Naive thymus-derived CD4-positive, alpha-beta T cell (primary cell): ENCODE measurements at regions of chr1 and their contacts with region 1.

Region 1: GRCh38 chr1:181397845-181398244 is 85.5 kb upstream of the CACNA1E start:
- DNase-seq: peak in 7 of 9 donors; percentile 24 to 57 (median 45)
- ATAC-seq: peak; percentile 47
- H3K4me3 ChIP-seq: peak overlapping the region; percentile 22
- H3K4me3 Mint-ChIP-seq: peak overlapping the region in 8 of 10 donors; percentile 57 to 82 (median 74)
- H3K27ac ChIP-seq: peak overlapping the region; percentile 62
- H3K27ac Mint-ChIP-seq: peak overlapping the region in 2 of 9 donors; percentile 83 to 94
- H3K4me1 ChIP-seq: peaks cover 41 to 77% of the 10 kb centered on the region in 2 donors
- H3K4me1 Mint-ChIP-seq: peaks cover 26 to 45% (median 41%) of the 10 kb centered on the region in 7 donors
- H3K27me3 ChIP-seq: no peaks in the 10 kb centered on the region
- H3K27me3 Mint-ChIP-seq: no peaks in the 10 kb centered on the region

Region 2: GRCh38 chr1:181033799-181034451 is 363.9 kb before region 1 on chr1 and contains the start of gene MR1:
- CTCF ChIA-PET with region 1: no interaction called
- POLR2A ChIA-PET with region 1: interaction called, 3 read pairs
- intact Hi-C with region 1: loop called in 1 of 2 experiments (anchors 2 kb)
- DNase-seq: peak in 8 of 9 donors; percentile 32 to 92 (median 88)
- ATAC-seq: peak; percentile 97
- H3K4me3 ChIP-seq: peak within 1 kb of the TSS; percentile 77
- H3K4me3 Mint-ChIP-seq: peak within 1 kb of the TSS; percentile 84 to 99 (median 97)
- H3K27ac ChIP-seq: peak within 1 kb of the TSS; percentile 95
- H3K27ac Mint-ChIP-seq: peak within 1 kb of the TSS; percentile 95 to 100 (median 98)
- H3K4me1 ChIP-seq: peaks cover 32 to 42% of the 10 kb centered on the region in 2 donors
- H3K4me1 Mint-ChIP-seq: peaks cover 39 to 69% (median 61%) of the 10 kb centered on the region in 7 donors
- H3K27me3 ChIP-seq: no peaks in the 10 kb centered on the region
- H3K27me3 Mint-ChIP-seq: peaks cover 0 to 6% (median 0%) of the 10 kb centered on the region in 5 donors
- total RNA-seq, gene MR1: 19.8 to 35.8 (median 29.7) TPM

Region 3: GRCh38 chr1:181189691-181190363 is 208.0 kb before region 1 on chr1:
- CTCF ChIA-PET with region 1: interaction called, 21 read pairs
- POLR2A ChIA-PET with region 1: interaction called, 3 read pairs
- intact Hi-C with region 1: loop called in 1 of 2 experiments (anchors 1 kb)
- DNase-seq: peak; percentile 49 to 95 (median 79)
- ATAC-seq: peak; percentile 88
- H3K4me3 ChIP-seq: no peak overlapping the region
- H3K4me3 Mint-ChIP-seq: peak overlapping the region in 8 of 10 donors; percentile 22 to 77 (median 55)
- H3K27ac ChIP-seq: no peak overlapping the region
- H3K27ac Mint-ChIP-seq: no peak overlapping the region
- H3K4me1 ChIP-seq: peaks cover 0 to 4% of the 10 kb centered on the region in 2 donors
- H3K4me1 Mint-ChIP-seq: peaks cover 0 to 13% (median 6%) of the 10 kb centered on the region in 7 donors
- H3K27me3 ChIP-seq: no peaks in the 10 kb centered on the region
- H3K27me3 Mint-ChIP-seq: peaks cover 0 to 22% (median 11%) of the 10 kb centered on the region in 5 donors

Region 4: GRCh38 chr1:181424786-181425403 is 27.1 kb after region 1 on chr1:
- CTCF ChIA-PET with region 1: interaction called, 26 read pairs
- POLR2A ChIA-PET with region 1: interaction called, 4 read pairs
- intact Hi-C with region 1: loop called (anchors 1 kb)
- DNase-seq: peak; percentile 45 to 82 (median 76)
- ATAC-seq: peak; percentile 86
- H3K4me3 ChIP-seq: peak overlapping the region; percentile 26
- H3K4me3 Mint-ChIP-seq: peak overlapping the region; percentile 59 to 86 (median 74)
- H3K27ac ChIP-seq: no peak overlapping the region
- H3K27ac Mint-ChIP-seq: peak overlapping the region in 8 of 9 donors; percentile 16 to 86 (median 58)
- H3K4me1 ChIP-seq: peaks cover 3 to 16% of the 10 kb centered on the region in 2 donors
- H3K4me1 Mint-ChIP-seq: peaks cover 0 to 12% (median 10%) of the 10 kb centered on the region in 7 donors
- H3K27me3 ChIP-seq: no peaks in the 10 kb centered on the region
- H3K27me3 Mint-ChIP-seq: peaks cover 17 to 29% (median 22%) of the 10 kb centered on the region in 5 donors

Region 5: GRCh38 chr1:182614796-182615454 is 1217.1 kb after region 1 on chr1:
- CTCF ChIA-PET with region 1: no interaction called
- POLR2A ChIA-PET with region 1: no interaction called
- intact Hi-C with region 1: loop called in 1 of 2 experiments (anchors 5 kb)
- DNase-seq: peak in 7 of 9 donors; percentile 26 to 68 (median 35)
- ATAC-seq: peak; percentile 14
- H3K4me3 ChIP-seq: peak overlapping the region; percentile 54
- H3K4me3 Mint-ChIP-seq: peak overlapping the region; percentile 74 to 87 (median 84)
- H3K27ac ChIP-seq: peak overlapping the region; percentile 15
- H3K27ac Mint-ChIP-seq: peak overlapping the region in 8 of 9 donors; percentile 74 to 95 (median 92)
- H3K4me1 ChIP-seq: peaks cover 15 to 32% of the 10 kb centered on the region in 2 donors
- H3K4me1 Mint-ChIP-seq: peaks cover 28 to 68% (median 32%) of the 10 kb centered on the region in 7 donors
- H3K27me3 ChIP-seq: no peaks in the 10 kb centered on the region
- H3K27me3 Mint-ChIP-seq: peaks cover 0 to 75% (median 30%) of the 10 kb centered on the region in 5 donors